Activated CD8-positive, alpha-beta T cell treated with anti-CD3 and anti-CD28 coated beads for 36 hours (primary cell): ENCODE measurements at regions of chr17 and their contacts with region 1.

Region 1: DNA sequence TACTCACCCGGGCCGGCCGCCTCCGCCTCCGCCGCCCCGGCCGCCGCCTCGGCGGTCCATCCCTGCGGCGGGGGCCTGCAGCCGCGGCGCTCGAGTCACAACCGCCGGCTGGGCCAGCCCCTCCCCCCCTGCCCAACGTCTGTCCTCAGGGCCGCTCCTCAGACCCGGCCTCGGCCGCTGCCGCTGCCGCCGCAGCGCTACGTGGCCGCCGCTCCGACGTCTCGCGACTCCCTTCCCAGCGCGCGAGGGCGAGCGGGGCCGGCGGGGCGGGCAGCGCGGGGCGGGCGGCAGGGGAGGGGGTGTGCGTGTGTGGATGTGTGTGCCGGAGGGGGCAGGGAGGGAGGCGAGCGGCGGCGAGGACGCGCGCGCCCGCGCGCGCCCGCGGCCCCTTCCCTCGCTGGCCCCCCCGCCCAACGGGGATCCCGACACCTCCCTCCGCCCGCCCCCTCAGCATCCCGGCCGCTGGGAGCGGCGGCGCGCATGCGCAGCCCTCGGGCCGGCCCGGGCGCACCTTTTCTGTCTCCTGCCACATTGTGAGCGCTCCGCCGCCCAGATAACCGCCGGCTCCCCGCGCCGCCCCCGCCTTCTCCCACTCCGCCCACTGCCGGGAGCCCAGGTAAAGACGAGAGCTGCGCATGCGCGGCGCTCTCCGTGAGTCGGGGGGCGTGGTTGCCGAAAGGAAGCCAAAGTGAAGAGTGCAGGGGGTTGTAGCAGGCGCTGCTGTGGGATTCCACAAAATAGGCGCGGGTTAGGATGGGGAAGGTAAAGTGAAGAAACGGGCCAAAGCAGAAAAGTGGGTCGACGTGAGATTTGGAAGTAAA is at the start of gene ZNF652:
- DNase-seq: peak; percentile 88
- ATAC-seq: peak; percentile 57
- H3K4me3 Mint-ChIP-seq: peak within 1 kb of the TSS; percentile 90
- H3K27ac Mint-ChIP-seq: peak within 1 kb of the TSS; percentile 93
- H3K4me1 Mint-ChIP-seq: peaks cover 58% of the 10 kb centered on the region
- H3K27me3 Mint-ChIP-seq: no peaks in the 10 kb centered on the region
- CTCF ChIP-seq: no peak
- total RNA-seq, gene ZNF652: 6.4 to 6.7 TPM

Region 2: GRCh38 chr17:49071106-49071505 is 291.0 kb before region 1 on chr17:
- CTCF ChIA-PET with region 1: no interaction called
- POLR2A ChIA-PET with region 1: no interaction called
- intact Hi-C with region 1: no loop called
- DNase-seq: no peak
- ATAC-seq: no peak
- H3K4me3 Mint-ChIP-seq: no peak overlapping the region
- H3K27ac Mint-ChIP-seq: no peak overlapping the region
- H3K4me1 Mint-ChIP-seq: no peaks in the 10 kb centered on the region
- H3K27me3 Mint-ChIP-seq: no peaks in the 10 kb centered on the region
- CTCF ChIP-seq: no peak

Region 3: DNA sequence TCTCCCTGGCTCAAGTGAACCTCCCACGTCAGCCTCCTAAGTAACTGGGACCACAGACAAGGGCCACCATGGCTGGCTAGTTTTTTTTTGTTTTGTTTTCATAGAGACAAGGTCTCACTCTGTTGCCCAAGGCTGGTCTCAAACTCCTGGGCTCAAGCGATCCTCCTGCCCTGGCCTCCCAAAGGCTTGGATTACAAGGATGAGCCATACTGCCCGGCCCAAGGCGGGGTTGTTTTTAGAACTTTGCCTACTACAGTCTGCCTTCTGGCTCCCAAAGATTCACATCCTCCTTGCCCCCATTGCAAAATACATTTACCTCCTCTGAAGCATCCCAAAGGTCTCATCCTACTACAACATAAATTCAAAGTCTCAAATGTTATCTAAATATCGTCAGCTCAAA is 82.1 kb before region 1 on chr17:
- CTCF ChIA-PET with region 1: no interaction called
- POLR2A ChIA-PET with region 1: no interaction called
- intact Hi-C with region 1: no loop called
- DNase-seq: no peak
- ATAC-seq: no peak
- H3K4me3 Mint-ChIP-seq: no peak overlapping the region
- H3K27ac Mint-ChIP-seq: no peak overlapping the region
- H3K4me1 Mint-ChIP-seq: no peaks in the 10 kb centered on the region
- H3K27me3 Mint-ChIP-seq: no peaks in the 10 kb centered on the region
- CTCF ChIP-seq: no peak

Region 4: DNA sequence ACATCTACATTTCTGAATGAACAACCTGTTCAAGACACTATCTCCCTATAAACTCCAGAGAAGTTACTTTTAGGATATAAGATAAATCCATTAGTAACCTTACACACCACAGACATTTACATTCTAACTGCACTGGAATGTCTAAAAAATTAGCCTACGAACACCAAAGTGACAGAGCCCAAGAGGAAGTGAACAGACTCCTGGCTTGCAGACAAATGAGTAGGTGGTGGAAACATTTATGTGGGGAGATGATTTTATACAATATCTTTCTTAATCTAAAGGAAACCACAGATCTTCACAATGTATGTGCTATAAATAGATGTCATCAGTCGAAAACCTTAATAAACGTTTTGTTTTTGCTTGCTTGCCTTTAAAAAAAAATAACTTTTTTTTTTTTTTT is 18.8 kb before region 1 on chr17:
- CTCF ChIA-PET with region 1: interaction called, 24 read pairs
- POLR2A ChIA-PET with region 1: interaction called, 26 read pairs
- intact Hi-C with region 1: loop called (anchors 2 kb)
- DNase-seq: peak; percentile 50
- ATAC-seq: peak; percentile 31
- H3K4me3 Mint-ChIP-seq: peak overlapping the region; percentile 73
- H3K27ac Mint-ChIP-seq: peak overlapping the region; percentile 94
- H3K4me1 Mint-ChIP-seq: peaks cover 73% of the 10 kb centered on the region
- H3K27me3 Mint-ChIP-seq: no peaks in the 10 kb centered on the region
- CTCF ChIP-seq: no peak

Region 5: GRCh38 chr17:49349535-49349934 is 12.6 kb before region 1 on chr17:
- CTCF ChIA-PET with region 1: interaction called, 8 read pairs
- POLR2A ChIA-PET with region 1: interaction called, 26 read pairs
- intact Hi-C with region 1: no loop called
- DNase-seq: no peak
- ATAC-seq: no peak
- H3K4me3 Mint-ChIP-seq: no peak overlapping the region
- H3K27ac Mint-ChIP-seq: peak overlapping the region; percentile 34
- H3K4me1 Mint-ChIP-seq: peaks cover 63% of the 10 kb centered on the region
- H3K27me3 Mint-ChIP-seq: no peaks in the 10 kb centered on the region
- CTCF ChIP-seq: no peak

Region 6: DNA sequence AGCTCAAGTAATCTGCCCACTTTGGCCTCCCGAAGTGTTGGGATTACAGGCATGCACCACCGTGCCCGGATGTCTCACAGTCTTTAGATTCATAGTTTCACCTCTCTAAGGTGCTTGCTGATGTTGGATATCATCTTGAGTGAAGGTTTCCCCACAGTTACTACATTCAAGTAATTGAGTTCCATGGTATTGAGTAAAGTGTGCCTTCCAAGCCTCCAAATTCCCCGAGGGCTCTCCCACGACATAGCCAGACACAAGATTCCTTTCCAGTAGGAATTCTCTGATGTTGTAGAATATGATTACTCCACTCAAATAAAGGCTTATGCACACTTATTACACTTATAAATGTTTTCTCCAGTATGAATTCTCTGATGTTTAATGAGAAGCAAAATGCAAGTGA is 16.2 kb after region 1 on chr17:
- CTCF ChIA-PET with region 1: no interaction called
- POLR2A ChIA-PET with region 1: no interaction called
- intact Hi-C with region 1: no loop called
- DNase-seq: no peak
- ATAC-seq: no peak
- H3K4me3 Mint-ChIP-seq: no peak overlapping the region
- H3K27ac Mint-ChIP-seq: no peak overlapping the region
- H3K4me1 Mint-ChIP-seq: no peaks in the 10 kb centered on the region
- H3K27me3 Mint-ChIP-seq: no peaks in the 10 kb centered on the region
- CTCF ChIP-seq: no peak

Region 7: GRCh38 chr17:49390548-49391324 is 28.6 kb after region 1 on chr17:
- CTCF ChIA-PET with region 1: interaction called, 81 read pairs
- POLR2A ChIA-PET with region 1: interaction called, 6 read pairs
- intact Hi-C with region 1: no loop called
- DNase-seq: peak; percentile 15
- ATAC-seq: no peak
- H3K4me3 Mint-ChIP-seq: no peak overlapping the region
- H3K27ac Mint-ChIP-seq: peak overlapping the region; percentile 87
- H3K4me1 Mint-ChIP-seq: peaks cover 56% of the 10 kb centered on the region
- H3K27me3 Mint-ChIP-seq: no peaks in the 10 kb centered on the region
- CTCF ChIP-seq: no peak